ENCODE measurements at regions of chr10 and their contacts with region 1.

Region 1: DNA sequence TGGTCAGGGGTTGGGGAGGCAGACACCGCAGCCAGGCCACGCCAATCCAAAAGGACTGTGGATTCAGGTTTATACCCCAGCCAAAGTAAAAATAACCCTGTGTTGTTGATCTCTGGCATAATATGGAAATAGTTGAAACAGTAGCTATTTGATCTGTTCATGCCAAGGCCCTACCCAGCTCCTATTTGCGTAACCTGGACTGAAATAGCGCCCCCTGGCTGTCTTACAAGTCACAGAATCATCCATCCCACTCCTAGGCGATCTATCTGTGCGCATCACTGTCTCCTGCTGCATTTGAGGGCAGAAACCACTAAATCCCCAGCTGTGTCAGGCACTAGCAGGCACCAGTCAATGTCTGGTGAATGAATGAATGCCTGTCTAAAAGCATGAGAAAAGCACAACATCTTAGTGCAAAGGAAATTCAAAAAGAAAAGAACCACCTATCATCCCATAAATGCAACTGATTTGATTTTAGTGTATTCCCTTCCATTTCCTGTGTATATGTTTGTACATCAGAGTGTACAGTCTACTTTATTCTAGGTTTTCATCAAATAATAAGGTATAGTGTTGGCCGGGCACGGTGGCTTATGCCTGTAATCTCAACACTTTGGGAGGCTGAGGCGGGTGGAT is 160.0 kb downstream of the SLIT1 start:
- DNase-seq: peak; percentile 74 to 86 (median 82)
- H3K4me3 ChIP-seq: no peak overlapping the region
- H3K27ac ChIP-seq: no peak overlapping the region
- H3K4me1 ChIP-seq: peaks cover 0 to 14% (median 12%) of the 10 kb centered on the region in 4 experiments
- H3K27me3 ChIP-seq: no peaks in the 10 kb centered on the region

Region 2: DNA sequence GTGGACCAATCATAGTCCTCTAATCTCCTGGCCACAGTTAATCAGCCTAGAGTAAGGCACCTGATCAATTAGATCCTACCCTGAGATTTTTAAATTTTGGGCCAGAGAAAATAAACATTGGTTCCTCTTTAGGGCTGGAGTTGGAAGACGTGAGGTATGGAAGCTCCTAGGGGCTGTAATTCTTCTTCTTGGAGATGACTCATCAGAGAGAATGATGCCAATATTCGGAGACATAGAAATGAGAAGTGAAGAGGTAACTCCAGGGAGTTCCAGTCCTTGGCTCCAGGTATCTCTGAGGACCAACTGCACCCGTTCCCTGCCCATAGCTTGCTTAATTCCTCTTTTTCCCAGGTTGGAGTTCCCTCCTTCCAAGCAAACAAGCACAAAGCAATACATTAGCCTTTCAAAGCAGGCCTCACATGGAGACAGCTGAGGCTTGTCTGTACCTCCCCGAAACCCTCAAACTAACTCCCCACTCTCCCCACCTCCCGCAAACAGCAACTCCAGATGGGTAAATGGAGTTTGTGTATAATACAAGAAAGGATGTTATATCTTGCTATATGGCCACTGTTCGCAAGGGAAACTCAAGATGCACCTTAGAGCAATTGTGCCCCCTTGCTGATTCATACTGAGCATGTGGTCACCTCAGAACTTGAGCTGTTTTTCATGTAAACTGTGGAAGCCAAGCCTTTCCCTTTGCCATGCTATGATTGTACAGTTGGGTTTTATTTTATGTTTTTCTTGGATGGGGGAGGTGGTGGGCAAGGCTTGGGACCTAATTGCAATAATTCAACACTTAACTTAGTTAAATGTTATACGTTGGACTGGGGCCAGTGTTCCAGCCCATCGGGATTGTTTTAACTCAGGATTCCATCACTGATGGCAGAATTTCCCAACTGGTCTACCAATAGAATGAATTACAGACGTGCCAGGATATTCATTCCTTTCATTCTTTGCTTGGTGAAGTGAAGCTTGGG is 334.7 kb before region 1 on chr10:
- CTCF ChIA-PET with region 1: no interaction called
- POLR2A ChIA-PET with region 1: no interaction called
- DNase-seq: peak in 2 of 3 donors; percentile 68 to 79
- H3K4me3 ChIP-seq: no peak overlapping the region
- H3K27ac ChIP-seq: no peak overlapping the region
- H3K4me1 ChIP-seq: peaks cover 18 to 42% (median 29%) of the 10 kb centered on the region in 4 experiments
- H3K27me3 ChIP-seq: no peaks in the 10 kb centered on the region

Region 3: GRCh38 chr10:96902731-96903358 is 122.9 kb before region 1 on chr10:
- CTCF ChIA-PET with region 1: interaction called, 13 read pairs
- POLR2A ChIA-PET with region 1: no interaction called
- DNase-seq: no peak
- H3K4me3 ChIP-seq: no peak overlapping the region
- H3K27ac ChIP-seq: no peak overlapping the region
- H3K4me1 ChIP-seq: peaks cover 0 to 5% (median 0%) of the 10 kb centered on the region in 4 experiments
- H3K27me3 ChIP-seq: no peaks in the 10 kb centered on the region

Region 4: DNA sequence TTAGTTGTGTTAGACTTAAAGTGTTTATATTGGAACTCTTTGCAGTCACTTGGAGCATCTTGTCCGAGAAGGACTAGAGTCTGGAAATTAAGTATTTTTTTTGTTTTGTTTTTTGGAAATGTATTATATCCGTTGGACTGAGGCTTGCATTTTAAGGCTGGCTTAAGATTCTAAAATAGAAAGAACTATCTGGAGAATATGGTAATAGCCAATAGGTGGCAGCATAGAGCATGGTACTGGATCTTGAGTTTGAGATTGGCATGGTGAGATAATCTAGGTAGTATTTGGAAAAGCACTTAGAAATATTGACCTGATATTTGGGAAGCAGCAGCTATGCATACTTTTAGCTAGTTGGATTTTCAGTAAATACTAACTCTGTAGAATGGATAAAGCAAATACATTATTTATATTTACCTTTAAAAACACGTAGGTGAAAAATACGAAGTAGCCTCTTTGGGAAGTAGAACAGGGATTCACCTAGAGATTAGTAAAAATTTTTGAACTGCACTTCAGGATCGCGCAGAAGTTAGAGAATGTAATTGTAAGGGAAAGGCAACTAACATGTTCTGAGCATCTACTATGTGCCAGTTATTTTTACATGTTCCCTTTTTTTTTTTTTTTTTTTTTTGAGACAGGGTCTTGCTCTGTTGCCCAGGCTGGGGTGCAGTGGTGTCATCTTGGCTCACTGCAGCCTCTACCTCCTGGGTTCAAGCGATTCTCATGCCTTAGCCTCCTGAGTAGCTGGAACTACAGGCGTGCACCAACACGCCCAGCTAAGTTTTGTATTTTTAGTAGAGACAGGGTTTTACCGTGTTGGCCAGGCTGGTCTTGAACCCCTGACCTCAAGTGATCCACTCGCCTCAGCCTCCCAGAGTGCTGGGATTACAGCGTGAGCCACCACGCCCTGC is 115.0 kb before region 1 on chr10:
- CTCF ChIA-PET with region 1: interaction called, 39 read pairs
- POLR2A ChIA-PET with region 1: no interaction called
- DNase-seq: peak; percentile 64 to 78 (median 69)
- H3K4me3 ChIP-seq: no peak overlapping the region
- H3K27ac ChIP-seq: no peak overlapping the region
- H3K4me1 ChIP-seq: no peaks in the 10 kb centered on the region
- H3K27me3 ChIP-seq: no peaks in the 10 kb centered on the region

Region 5: GRCh38 chr10:96984541-96985131 is 41.1 kb before region 1 on chr10:
- CTCF ChIA-PET with region 1: interaction called, 67 read pairs
- POLR2A ChIA-PET with region 1: interaction called, 3 read pairs
- DNase-seq: peak; percentile 86 to 100 (median 98)
- H3K4me3 ChIP-seq: peak overlapping the region in 6 of 7 experiments; percentile 39 to 73 (median 54)
- H3K27ac ChIP-seq: peak overlapping the region; percentile 52 to 84
- H3K4me1 ChIP-seq: peaks cover 16 to 49% (median 36%) of the 10 kb centered on the region in 4 experiments
- H3K27me3 ChIP-seq: no peaks in the 10 kb centered on the region

Region 6: GRCh38 chr10:97010695-97011206 is 15.0 kb before region 1 on chr10:
- CTCF ChIA-PET with region 1: interaction called, 20 read pairs
- POLR2A ChIA-PET with region 1: no interaction called
- DNase-seq: no peak
- H3K4me3 ChIP-seq: no peak overlapping the region
- H3K27ac ChIP-seq: no peak overlapping the region
- H3K4me1 ChIP-seq: no peaks in the 10 kb centered on the region
- H3K27me3 ChIP-seq: no peaks in the 10 kb centered on the region

Region 7: DNA sequence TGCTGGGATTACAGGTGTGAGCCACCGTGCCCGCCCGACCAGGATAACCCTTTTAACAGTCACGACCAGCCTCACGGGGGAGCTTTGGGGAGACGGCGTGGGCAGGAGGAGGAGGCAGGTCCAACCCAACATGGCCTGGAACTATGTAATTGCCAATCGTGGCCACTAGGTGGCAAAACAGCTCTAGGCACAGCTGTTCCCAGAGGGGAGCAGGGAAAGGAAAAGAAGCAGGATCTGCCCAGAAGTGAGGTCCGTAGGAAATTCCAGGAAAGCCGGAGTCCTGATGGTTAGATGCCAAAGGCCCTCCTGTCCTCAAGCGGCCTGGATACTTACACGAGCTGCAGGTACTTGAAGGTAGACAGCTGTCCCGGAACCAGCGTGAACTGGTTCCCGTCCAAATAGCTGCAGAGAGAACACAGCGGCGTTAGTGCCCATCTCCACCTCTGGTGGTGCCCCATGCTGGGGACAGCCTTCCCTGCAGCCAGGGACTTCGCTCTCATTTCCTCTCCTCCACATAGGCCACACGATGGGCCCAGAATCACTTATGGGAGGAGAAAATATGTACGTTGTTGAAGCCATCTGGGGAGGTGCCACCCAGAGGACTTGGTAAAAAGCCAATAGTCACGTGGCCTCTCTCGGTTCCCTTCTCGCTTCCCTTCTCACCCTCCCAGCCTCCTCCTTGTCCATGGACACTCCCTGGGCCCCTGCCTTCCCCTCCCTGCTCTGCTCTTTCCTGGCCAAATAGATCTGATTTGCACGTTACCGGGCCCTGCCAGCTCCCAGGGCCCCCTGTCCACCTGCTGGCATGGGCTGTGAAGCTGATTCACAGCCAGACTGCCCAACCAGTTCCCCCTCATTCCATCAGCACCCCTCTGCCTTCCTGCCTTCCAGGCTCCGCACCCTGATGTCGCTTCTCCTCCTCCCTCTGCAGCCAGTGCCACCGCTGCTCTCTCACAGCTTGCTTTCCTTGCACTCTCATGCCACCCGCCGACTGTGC is 11.9 kb after region 1 on chr10:
- CTCF ChIA-PET with region 1: interaction called, 78 read pairs
- POLR2A ChIA-PET with region 1: no interaction called
- DNase-seq: peak; percentile 79 to 86 (median 86)
- H3K4me3 ChIP-seq: peak overlapping the region in 6 of 7 experiments; percentile 43 to 82 (median 70)
- H3K27ac ChIP-seq: no peak overlapping the region
- H3K4me1 ChIP-seq: peaks cover 0 to 9% (median 7%) of the 10 kb centered on the region in 4 experiments
- H3K27me3 ChIP-seq: no peaks in the 10 kb centered on the region

Region 8: GRCh38 chr10:97543025-97543575 is 517.4 kb after region 1 on chr10:
- CTCF ChIA-PET with region 1: no interaction called
- POLR2A ChIA-PET with region 1: no interaction called
- DNase-seq: peak; percentile 71 to 86 (median 81)
- H3K4me3 ChIP-seq: peak overlapping the region in 3 of 7 experiments; percentile 11 to 57 (median 33)
- H3K27ac ChIP-seq: peak overlapping the region in 1 of 2 experiments; percentile 57
- H3K4me1 ChIP-seq: peaks cover 0 to 30% (median 24%) of the 10 kb centered on the region in 4 experiments
- H3K27me3 ChIP-seq: no peaks in the 10 kb centered on the region

Measured in common myeloid progenitor, CD34-positive (primary cell).